IMR-90 (cell line): ENCODE measurements at regions of chr15 and their contacts with region 1.

Region 1: GRCh38 chr15:39180483-39180933 is 400.4 kb upstream of the THBS1 start:
- DNase-seq: peak; percentile 88
- ATAC-seq: peak; percentile 66
- H3K4me3 ChIP-seq: no peak overlapping the region
- H3K27ac ChIP-seq: peak overlapping the region; percentile 100; the same call in 1 of the 2 replicates
- H3K4me1 ChIP-seq: peaks cover 20% of the 10 kb centered on the region
- H3K27me3 ChIP-seq: no peaks in the 10 kb centered on the region
- CTCF ChIP-seq: no peak
- POLR2A ChIP-seq: no peak
- RAD21 ChIP-seq: no peak

Region 2: GRCh38 chr15:38905634-38906033 is 274.9 kb before region 1 on chr15:
- CTCF ChIA-PET with region 1: no interaction called
- POLR2A ChIA-PET with region 1: no interaction called
- dilution Hi-C with region 1: no loop called
- in situ Hi-C with region 1: no loop called
- intact Hi-C with region 1: no loop called
- DNase-seq: peak; percentile 40
- ATAC-seq: no peak
- H3K4me3 ChIP-seq: no peak overlapping the region
- H3K27ac ChIP-seq: no peak overlapping the region
- H3K4me1 ChIP-seq: no peaks in the 10 kb centered on the region
- H3K27me3 ChIP-seq: no peaks in the 10 kb centered on the region
- CTCF ChIP-seq: no peak
- POLR2A ChIP-seq: no peak
- RAD21 ChIP-seq: no peak

Region 3: DNA sequence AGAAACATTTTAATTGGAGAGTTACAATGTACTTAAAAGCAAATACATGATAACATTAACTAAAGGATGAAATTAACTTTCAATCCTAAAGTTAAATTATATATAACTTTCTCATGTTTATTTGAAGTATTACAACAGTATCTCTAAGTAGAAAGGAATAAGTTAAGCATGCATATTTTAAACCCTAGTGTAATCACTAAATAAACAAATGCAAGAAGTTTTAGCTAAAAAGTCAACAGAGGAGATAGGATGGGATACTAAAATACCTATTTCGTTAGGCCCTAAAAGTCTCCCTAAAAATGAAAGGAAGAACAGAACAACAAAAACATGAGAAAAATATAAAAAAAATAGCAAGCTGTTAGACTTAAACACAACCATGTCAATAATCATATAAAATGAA is 39.1 kb after region 1 on chr15:
- CTCF ChIA-PET with region 1: no interaction called
- POLR2A ChIA-PET with region 1: no interaction called
- dilution Hi-C with region 1: no loop called
- in situ Hi-C with region 1: no loop called
- intact Hi-C with region 1: no loop called
- DNase-seq: no peak
- ATAC-seq: peak; percentile 84
- H3K4me3 ChIP-seq: no peak overlapping the region
- H3K27ac ChIP-seq: peak overlapping the region; percentile 52; the same call in 1 of the 2 replicates
- H3K4me1 ChIP-seq: peaks cover 7% of the 10 kb centered on the region
- H3K27me3 ChIP-seq: no peaks in the 10 kb centered on the region
- CTCF ChIP-seq: no peak
- POLR2A ChIP-seq: no peak
- RAD21 ChIP-seq: no peak

Region 4: GRCh38 chr15:39279311-39279710 is 98.8 kb after region 1 on chr15:
- CTCF ChIA-PET with region 1: no interaction called
- POLR2A ChIA-PET with region 1: interaction called, 3 read pairs
- dilution Hi-C with region 1: no loop called
- in situ Hi-C with region 1: no loop called
- intact Hi-C with region 1: loop called (anchors 1 kb)
- DNase-seq: peak; percentile 69
- ATAC-seq: peak; percentile 60
- H3K4me3 ChIP-seq: no peak overlapping the region
- H3K27ac ChIP-seq: peak overlapping the region; percentile 65; the same call in 1 of the 2 replicates
- H3K4me1 ChIP-seq: peaks cover 15% of the 10 kb centered on the region
- H3K27me3 ChIP-seq: no peaks in the 10 kb centered on the region
- CTCF ChIP-seq: no peak
- POLR2A ChIP-seq: no peak
- RAD21 ChIP-seq: no peak

Region 5: GRCh38 chr15:39362821-39363561 is 182.5 kb after region 1 on chr15:
- CTCF ChIA-PET with region 1: no interaction called
- POLR2A ChIA-PET with region 1: no interaction called
- dilution Hi-C with region 1: no loop called
- in situ Hi-C with region 1: no loop called
- intact Hi-C with region 1: loop called (anchors 2 kb)
- DNase-seq: peak; percentile 96
- ATAC-seq: peak; percentile 61
- H3K4me3 ChIP-seq: no peak overlapping the region
- H3K27ac ChIP-seq: peak overlapping the region; percentile 78; the same call in 1 of the 2 replicates
- H3K4me1 ChIP-seq: peaks cover 16% of the 10 kb centered on the region
- H3K27me3 ChIP-seq: no peaks in the 10 kb centered on the region
- CTCF ChIP-seq: no peak
- POLR2A ChIP-seq: no peak
- RAD21 ChIP-seq: no peak

Region 6: GRCh38 chr15:39404767-39405181 is 224.3 kb after region 1 on chr15:
- CTCF ChIA-PET with region 1: no interaction called
- POLR2A ChIA-PET with region 1: no interaction called
- dilution Hi-C with region 1: no loop called
- in situ Hi-C with region 1: no loop called
- intact Hi-C with region 1: loop called (anchors 5 kb)
- DNase-seq: peak; percentile 95
- ATAC-seq: peak; percentile 83
- H3K4me3 ChIP-seq: no peak overlapping the region
- H3K27ac ChIP-seq: peak overlapping the region; percentile 88
- H3K4me1 ChIP-seq: peaks cover 11% of the 10 kb centered on the region
- H3K27me3 ChIP-seq: no peaks in the 10 kb centered on the region
- CTCF ChIP-seq: no peak
- POLR2A ChIP-seq: no peak
- RAD21 ChIP-seq: 0 out of 2 replicates have a peak, but pooled peaks have one; percentile 11